Heart right ventricle (tissue), 16 donors: ENCODE measurements at regions of chr9 and their contacts with region 1.

Region 1: GRCh38 chr9:129794549-129794948 is 8.4 kb upstream of the TOR1B start:
- DNase-seq: no peak
- ATAC-seq: no peak
- H3K4me3 ChIP-seq: no peak overlapping the region
- H3K27ac ChIP-seq: no peak overlapping the region
- H3K4me1 ChIP-seq: peaks cover 0 to 8% (median 0%) of the 10 kb centered on the region in 9 donors
- H3K27me3 ChIP-seq: peaks cover 0 to 14% (median 0%) of the 10 kb centered on the region in 7 donors
- CTCF ChIP-seq: no peak

Region 2: GRCh38 chr9:129131300-129132145 is 663.0 kb before region 1 on chr9:
- intact Hi-C with region 1: loop called in 3 of 10 experiments (anchors 5 to 10 kb)
- DNase-seq: peak; percentile 81 to 82
- ATAC-seq: peak; percentile 80 to 90 (median 86)
- H3K4me3 ChIP-seq: no peak overlapping the region
- H3K27ac ChIP-seq: peak overlapping the region in 2 of 10 donors; percentile 2 to 28
- H3K4me1 ChIP-seq: peaks cover 0 to 20% (median 6%) of the 10 kb centered on the region in 9 donors
- H3K27me3 ChIP-seq: no peaks in the 10 kb centered on the region
- CTCF ChIP-seq: peak; percentile 95 to 99 (median 98)

Region 3: GRCh38 chr9:129761901-129762364 is 32.6 kb before region 1 on chr9:
- intact Hi-C with region 1: no loop called
- DNase-seq: no peak
- ATAC-seq: peak; percentile 13 to 65 (median 44)
- H3K4me3 ChIP-seq: no peak overlapping the region
- H3K27ac ChIP-seq: peak overlapping the region in 9 of 10 donors; percentile 13 to 79 (median 68)
- H3K4me1 ChIP-seq: peaks cover 0 to 45% (median 18%) of the 10 kb centered on the region in 9 donors
- H3K27me3 ChIP-seq: peaks cover 0 to 3% (median 0%) of the 10 kb centered on the region in 7 donors
- CTCF ChIP-seq: no peak